ENCODE measurements at regions of chr3 and their contacts with region 1.

Region 1: GRCh38 chr3:10344147-10344943 is 23.4 kb upstream of the SEC13 start:
- DNase-seq: peak; percentile 12
- H3K4me3 ChIP-seq: no peak overlapping the region
- H3K27ac ChIP-seq: no peak overlapping the region
- H3K4me1 ChIP-seq: no peaks in the 10 kb centered on the region
- H3K27me3 ChIP-seq: no peaks in the 10 kb centered on the region
- CTCF ChIP-seq: peak; percentile 70 to 84 (median 73)
- POLR2A ChIP-seq: no peak

Region 2: GRCh38 chr3:10198761-10199649 is 145.3 kb before region 1 on chr3:
- intact Hi-C with region 1: no loop called
- DNase-seq: peak; percentile 64
- H3K4me3 ChIP-seq: no peak overlapping the region
- H3K27ac ChIP-seq: peak overlapping the region; percentile 15 to 28
- H3K4me1 ChIP-seq: peaks cover 15% of the 10 kb centered on the region
- H3K27me3 ChIP-seq: no peaks in the 10 kb centered on the region
- CTCF ChIP-seq: no peak
- POLR2A ChIP-seq: no peak

Region 3: GRCh38 chr3:10738688-10739372 is 394.5 kb after region 1 on chr3:
- intact Hi-C with region 1: loop called (anchors 1 kb)
- DNase-seq: peak; percentile 62
- H3K4me3 ChIP-seq: no peak overlapping the region
- H3K27ac ChIP-seq: no peak overlapping the region
- H3K4me1 ChIP-seq: no peaks in the 10 kb centered on the region
- H3K27me3 ChIP-seq: peaks cover 6% of the 10 kb centered on the region
- CTCF ChIP-seq: peak; percentile 65 to 84 (median 78)
- POLR2A ChIP-seq: no peak